Activated CD4-positive, alpha-beta T cell treated with anti-CD3 and anti-CD28 coated beads for 36 hours (primary cell): ENCODE measurements at regions of chr17 and their contacts with region 1.

Region 1: DNA sequence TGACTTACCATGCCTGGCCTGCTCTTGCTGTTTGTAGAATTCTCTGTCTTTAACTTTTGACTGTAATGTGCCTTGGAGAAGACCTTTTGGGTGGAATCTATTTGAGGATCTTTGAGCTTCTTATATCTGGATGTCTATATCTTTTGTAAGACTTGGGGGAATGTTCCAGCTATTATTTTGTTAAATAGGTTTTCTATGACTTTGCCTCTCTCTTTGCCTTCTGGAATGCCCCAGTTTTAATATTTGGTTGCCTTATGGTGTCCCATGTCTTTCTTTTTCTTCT is 10.3 kb upstream of the PHB1 start:
- DNase-seq: no peak
- ATAC-seq: no peak
- H3K4me3 Mint-ChIP-seq: no peak overlapping the region
- H3K27ac Mint-ChIP-seq: no peak overlapping the region
- H3K4me1 Mint-ChIP-seq: no peaks in the 10 kb centered on the region
- H3K27me3 Mint-ChIP-seq: peaks cover 10% of the 10 kb centered on the region

Region 2: DNA sequence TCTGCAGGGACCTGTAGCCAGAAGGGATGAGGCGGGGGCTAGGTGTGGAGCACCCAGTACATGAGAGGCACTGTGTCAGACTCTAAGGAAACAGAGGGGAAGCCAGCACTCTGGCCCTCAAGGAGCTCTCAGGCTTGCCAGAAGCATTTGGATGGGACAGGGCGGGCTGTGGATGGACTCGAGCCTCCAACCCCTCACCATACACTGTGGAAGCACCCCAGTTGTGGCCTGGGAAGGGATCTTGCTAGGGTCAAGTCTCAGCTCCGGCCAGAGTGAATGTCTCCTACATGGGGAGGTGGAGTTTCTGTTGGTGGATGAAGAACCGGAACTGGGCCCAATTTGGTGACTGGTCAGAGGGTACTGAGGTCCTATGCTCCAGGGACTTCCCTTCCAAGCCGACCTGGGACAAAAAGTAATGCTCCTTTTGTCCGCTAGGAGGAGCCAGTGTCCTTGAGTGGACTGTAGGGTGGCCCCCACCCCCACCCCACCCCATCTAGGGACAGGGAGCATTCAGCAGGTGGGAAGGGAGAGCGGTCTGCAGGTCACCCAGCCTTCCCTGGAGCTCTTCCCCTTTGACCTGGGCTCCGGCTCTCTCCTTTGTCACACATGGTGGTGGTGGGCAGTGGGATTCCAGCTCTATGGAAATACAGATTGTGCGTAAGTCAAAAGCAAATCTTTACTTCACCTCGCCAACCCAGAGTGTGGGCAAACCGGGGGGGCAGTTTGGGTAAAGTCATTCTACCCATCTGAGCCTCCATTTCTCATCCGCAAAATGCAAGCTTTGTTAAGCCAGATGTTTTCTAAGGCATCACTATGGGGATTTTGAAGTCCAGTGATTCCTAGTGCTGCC is 10.1 kb after region 1 on chr17:
- CTCF ChIA-PET with region 1: interaction called, 10 read pairs
- POLR2A ChIA-PET with region 1: no interaction called
- intact Hi-C with region 1: no loop called
- DNase-seq: peak; percentile 66
- ATAC-seq: peak; percentile 60
- H3K4me3 Mint-ChIP-seq: no peak overlapping the region
- H3K27ac Mint-ChIP-seq: no peak overlapping the region
- H3K4me1 Mint-ChIP-seq: no peaks in the 10 kb centered on the region
- H3K27me3 Mint-ChIP-seq: peaks cover 20% of the 10 kb centered on the region

Region 3: GRCh38 chr17:49887086-49888028 is 462.4 kb after region 1 on chr17:
- CTCF ChIA-PET with region 1: no interaction called
- POLR2A ChIA-PET with region 1: no interaction called
- intact Hi-C with region 1: no loop called
- DNase-seq: no peak
- ATAC-seq: no peak
- H3K4me3 Mint-ChIP-seq: no peak overlapping the region
- H3K27ac Mint-ChIP-seq: no peak overlapping the region
- H3K4me1 Mint-ChIP-seq: no peaks in the 10 kb centered on the region
- H3K27me3 Mint-ChIP-seq: peaks cover 32% of the 10 kb centered on the region

Region 4: DNA sequence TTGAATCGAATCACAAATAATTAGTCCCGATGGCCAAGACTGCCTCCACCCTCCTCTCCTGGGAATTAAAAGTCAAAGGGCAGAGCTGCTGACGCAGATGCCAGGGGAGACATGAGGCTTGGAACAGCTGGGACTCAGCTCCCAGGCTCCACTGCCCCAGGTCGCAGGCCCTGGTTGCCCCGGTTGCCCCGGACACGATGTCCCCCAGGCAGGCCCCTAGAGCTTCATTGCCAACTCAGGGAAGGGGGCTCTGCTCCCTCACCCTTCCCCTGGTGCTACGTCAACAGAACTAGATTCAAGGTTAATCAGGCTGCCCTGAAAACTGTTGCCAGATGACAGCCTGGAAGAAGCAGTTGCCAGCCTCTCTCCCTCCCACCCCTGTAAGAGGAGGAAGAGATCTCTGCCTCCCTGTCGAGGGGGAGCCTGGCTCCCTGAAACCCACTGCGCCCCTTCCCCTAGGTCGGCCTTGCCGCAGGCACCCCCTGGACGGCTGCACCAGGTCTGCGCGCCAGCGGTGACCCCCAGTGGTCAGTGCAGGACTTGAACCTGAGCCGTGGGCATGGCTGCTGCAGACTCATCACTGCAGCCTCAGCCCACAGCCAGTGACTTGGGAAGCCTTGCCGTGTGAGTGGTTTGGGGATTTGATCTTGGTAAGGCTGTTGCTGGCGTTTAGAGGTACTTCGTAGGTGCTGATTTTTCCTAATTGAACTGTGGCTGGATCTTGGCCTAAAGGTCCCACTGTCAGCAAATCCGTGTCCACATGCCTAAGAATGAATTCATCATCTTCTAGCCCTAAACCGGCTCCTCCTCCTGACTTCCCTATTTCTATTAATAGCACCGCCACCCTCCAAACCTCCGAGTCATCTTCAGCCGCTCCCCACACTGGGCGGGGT is 1525.3 kb after region 1 on chr17:
- CTCF ChIA-PET with region 1: no interaction called
- POLR2A ChIA-PET with region 1: no interaction called
- intact Hi-C with region 1: no loop called
- DNase-seq: peak; percentile 76
- ATAC-seq: peak; percentile 88
- H3K4me3 Mint-ChIP-seq: no peak overlapping the region
- H3K27ac Mint-ChIP-seq: no peak overlapping the region
- H3K4me1 Mint-ChIP-seq: peaks cover 16% of the 10 kb centered on the region
- H3K27me3 Mint-ChIP-seq: no peaks in the 10 kb centered on the region